ENCODE measurements at regions of chr17 and their contacts with region 1.

Region 1: DNA sequence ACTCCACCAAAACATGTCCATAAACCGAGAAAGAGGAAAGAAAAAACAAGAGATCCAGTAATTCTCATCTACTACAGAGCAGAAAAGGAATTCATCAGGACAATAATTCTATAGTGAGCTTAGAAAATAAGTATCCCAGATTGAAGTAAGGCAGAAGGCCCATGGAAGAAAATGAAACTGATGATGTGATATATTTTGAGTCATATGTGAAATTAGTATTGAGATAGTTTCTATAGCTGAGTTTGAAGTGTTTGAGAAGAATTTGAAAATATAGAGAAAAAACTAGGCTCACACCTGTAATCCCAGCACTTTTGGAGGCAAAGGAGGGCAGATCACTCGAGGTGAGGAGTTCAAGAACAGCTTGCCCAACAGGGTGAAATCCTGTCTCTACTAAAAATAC is 19.7 kb downstream of the LUC7L3 start:
- DNase-seq: no peak
- H3K4me3 ChIP-seq: no peak overlapping the region
- H3K27ac ChIP-seq: no peak overlapping the region
- H3K4me1 ChIP-seq: no peaks in the 10 kb centered on the region
- H3K27me3 ChIP-seq: no peaks in the 10 kb centered on the region
- CTCF ChIP-seq: no peak
- EP300 ChIP-seq: no peak
- POLR2A ChIP-seq: no peak

Region 2: DNA sequence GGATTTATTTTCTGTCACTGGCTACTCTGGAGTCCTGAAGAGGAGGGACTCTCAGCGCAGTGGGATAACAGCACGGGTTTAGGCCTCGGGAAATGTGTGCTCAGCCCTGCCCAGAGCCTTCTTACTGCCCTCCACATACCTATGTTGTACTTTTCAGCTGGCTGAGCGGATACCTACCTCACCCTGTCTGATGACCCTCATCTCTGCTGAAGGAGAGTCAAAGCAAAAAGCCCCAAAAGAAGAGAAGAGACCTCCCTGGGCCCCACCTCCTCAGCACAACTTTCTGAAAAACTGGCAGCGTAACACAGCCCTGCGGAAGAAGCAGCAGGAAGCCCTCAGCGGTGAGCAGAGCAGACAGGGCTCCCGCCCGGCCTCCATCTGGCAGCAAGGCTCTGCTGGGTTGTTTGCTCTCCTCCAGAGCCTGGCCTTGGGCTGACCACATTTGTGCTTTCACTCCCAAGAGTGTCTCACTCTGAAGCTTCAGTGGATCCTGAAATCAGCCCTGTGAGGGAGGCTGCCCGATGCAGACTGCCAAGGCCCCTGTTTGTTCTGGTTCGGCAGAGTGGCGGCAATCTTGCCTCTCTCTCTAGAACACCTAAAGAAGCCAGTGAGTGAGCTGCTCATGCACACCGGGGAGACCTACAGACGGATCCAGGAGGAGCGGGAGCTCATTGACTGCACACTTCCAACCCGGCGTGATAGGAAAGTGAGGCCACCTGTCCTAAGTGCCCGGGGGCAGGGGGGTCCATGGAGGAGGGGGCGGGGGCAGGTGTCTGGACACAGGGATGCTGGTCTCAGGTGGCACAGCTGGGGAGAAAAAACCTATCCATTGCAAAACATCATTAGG is 220.5 kb before region 1 on chr17:
- intact Hi-C with region 1: no loop called
- DNase-seq: peak; percentile 73 to 87 (median 78)
- H3K4me3 ChIP-seq: no peak overlapping the region
- H3K27ac ChIP-seq: peak overlapping the region; percentile 71 to 73
- H3K4me1 ChIP-seq: peaks cover 25% of the 10 kb centered on the region
- H3K27me3 ChIP-seq: no peaks in the 10 kb centered on the region
- CTCF ChIP-seq: no peak
- EP300 ChIP-seq: no peak
- POLR2A ChIP-seq: no peak

Region 3: GRCh38 chr17:50697663-50698274 is 41.3 kb before region 1 on chr17:
- intact Hi-C with region 1: loop called in 1 of 4 experiments (anchors 2 kb)
- DNase-seq: no peak
- H3K4me3 ChIP-seq: no peak overlapping the region
- H3K27ac ChIP-seq: no peak overlapping the region
- H3K4me1 ChIP-seq: peaks cover 4% of the 10 kb centered on the region
- H3K27me3 ChIP-seq: no peaks in the 10 kb centered on the region
- CTCF ChIP-seq: no peak
- EP300 ChIP-seq: no peak
- POLR2A ChIP-seq: no peak